ENCODE measurements at regions of chr2 and their contacts with region 1.

Region 1: DNA sequence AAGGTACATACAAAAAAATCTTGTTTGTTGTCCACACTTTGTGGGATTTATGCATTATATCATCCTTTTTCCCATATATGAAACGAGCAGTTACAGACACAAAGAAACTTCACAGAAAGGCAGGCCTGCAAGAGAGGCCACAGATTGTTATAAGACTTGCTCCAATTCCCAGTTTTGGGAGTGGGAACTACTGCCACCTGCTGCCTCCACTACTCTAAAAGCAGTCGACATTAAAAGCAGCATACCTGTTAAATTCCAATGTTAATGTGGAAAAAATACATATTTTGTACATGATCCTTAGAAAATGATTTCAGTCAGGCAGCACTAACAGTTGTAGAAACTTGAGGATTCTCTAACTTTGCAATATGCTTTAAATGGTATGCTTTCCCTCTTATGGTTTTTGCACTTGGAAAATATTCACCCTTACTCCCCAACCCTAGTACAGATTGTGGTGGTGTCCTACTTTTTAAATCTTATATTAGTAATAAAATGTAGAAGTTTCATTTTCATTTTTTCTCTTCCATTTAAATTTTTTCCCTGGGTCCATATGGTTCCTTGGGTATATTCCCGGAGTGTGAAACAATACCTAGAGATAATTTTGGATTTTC is 37.9 kb downstream of the SLC38A11 start:
- DNase-seq: no peak
- CTCF ChIP-seq: peak; percentile 1

Region 2: GRCh38 chr2:164737612-164738081 is 179.8 kb before region 1 on chr2:
- in situ Hi-C with region 1: loop called (anchors 25 kb)
- DNase-seq: peak; percentile 10
- CTCF ChIP-seq: peak; percentile 56

Region 3: DNA sequence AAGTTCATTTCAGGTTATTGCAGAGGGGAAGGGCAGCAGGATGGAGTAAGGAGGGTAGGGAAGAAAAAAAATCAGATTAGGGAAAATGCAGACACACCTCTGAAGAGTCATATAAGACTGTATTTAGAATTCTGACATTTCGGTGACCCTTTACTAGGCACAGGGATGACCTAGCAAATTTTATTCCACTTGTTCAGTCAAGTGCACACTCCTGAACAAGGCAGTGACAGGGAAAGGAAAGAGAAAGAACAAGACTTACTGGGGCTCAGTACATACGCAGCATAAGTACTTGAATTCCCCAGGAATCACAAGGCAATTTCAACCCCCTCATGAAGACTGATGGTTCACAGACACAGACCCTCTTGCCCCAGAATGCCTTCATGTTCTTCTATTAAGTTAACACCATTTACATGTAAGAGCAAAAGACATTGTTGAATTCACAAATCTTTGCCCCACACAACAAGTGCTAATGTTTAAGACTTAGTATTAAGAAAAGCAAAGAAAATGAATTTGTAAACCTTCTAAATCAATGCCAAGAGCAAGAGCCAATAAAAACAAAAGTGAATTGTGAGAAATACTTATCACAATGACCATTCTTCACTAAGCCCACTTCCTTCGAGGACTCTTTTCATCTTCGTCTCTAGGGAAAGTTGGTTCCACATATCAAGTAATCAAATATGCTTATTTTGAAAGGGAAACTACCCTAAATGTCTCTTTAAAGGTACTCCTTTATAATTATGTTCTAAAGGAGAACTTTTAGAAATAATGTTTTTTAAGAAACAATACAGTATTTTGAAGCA is 122.8 kb before region 1 on chr2:
- in situ Hi-C with region 1: no loop called
- DNase-seq: no peak
- CTCF ChIP-seq: no peak